ENCODE measurements at regions of chr15 and their contacts with region 1.

Region 1: GRCh38 chr15:79004336-79004735 is 59.5 kb upstream of the CTSH start:
- DNase-seq: peak; percentile 74 to 91 (median 89)
- H3K4me3 ChIP-seq: peak overlapping the region in 1 of 3 experiments; percentile 36
- H3K4me3 Mint-ChIP-seq: peak overlapping the region in 1 of 2 donors; percentile 65
- H3K27ac ChIP-seq: peak overlapping the region in 1 of 2 donors; percentile 39
- H3K27ac Mint-ChIP-seq: peak overlapping the region; percentile 18 to 88 (median 74)
- H3K4me1 ChIP-seq: peaks cover 28 to 40% of the 10 kb centered on the region in 2 donors
- H3K4me1 Mint-ChIP-seq: peaks cover 42% of the 10 kb centered on the region
- H3K27me3 ChIP-seq: no peaks in the 10 kb centered on the region
- H3K27me3 Mint-ChIP-seq: peaks cover 4 to 6% (median 4%) of the 10 kb centered on the region in 3 donors
- CTCF ChIP-seq: no peak

Region 2: DNA sequence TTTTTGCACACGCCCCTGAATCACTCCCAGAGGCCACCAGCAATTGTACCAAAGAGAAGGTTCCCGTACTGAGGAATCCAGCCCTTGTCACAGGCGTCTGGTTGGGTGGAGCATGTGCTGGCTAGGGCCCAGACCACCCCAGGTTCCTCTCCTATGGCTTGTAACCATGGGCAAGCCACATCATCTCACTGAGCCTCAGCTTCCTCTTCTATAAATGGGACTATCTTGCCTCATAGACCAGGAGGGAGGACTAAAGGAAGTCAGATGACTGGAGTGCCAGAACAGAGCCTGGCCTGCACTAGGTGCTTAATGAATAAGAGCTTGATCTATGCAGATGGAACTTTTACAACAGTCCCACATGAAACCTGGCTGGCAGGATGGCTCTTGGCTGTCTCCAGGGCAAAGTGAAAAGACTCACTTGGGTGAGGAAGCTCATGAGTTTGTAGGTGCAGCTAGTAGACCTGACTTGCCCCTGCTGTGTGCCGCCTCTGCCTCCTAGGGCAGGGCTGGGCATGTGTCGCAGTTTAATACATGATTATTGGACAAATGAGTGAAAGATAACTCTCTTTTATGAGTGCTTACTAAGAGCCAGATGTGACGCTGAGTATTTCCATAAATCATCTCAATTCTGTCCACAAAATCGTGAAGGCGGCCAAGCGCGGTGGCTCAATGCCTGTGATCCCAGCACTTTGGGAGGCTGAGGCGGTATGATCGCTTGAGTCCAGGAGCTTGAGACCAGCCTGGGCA is 88.8 kb before region 1 on chr15:
- intact Hi-C with region 1: loop called (anchors 2 to 5 kb)
- DNase-seq: peak; percentile 88 to 97 (median 93)
- H3K4me3 ChIP-seq: peak overlapping the region in 1 of 3 experiments; percentile 38
- H3K4me3 Mint-ChIP-seq: peak overlapping the region in 1 of 2 donors; percentile 33
- H3K27ac ChIP-seq: peak overlapping the region; percentile 81 to 83
- H3K27ac Mint-ChIP-seq: peak overlapping the region; percentile 91 to 95 (median 93)
- H3K4me1 ChIP-seq: peaks cover 72 to 74% of the 10 kb centered on the region in 2 donors
- H3K4me1 Mint-ChIP-seq: peaks cover 69% of the 10 kb centered on the region
- H3K27me3 ChIP-seq: no peaks in the 10 kb centered on the region
- H3K27me3 Mint-ChIP-seq: no peaks in the 10 kb centered on the region
- CTCF ChIP-seq: no peak

Region 3: GRCh38 chr15:78988361-78988911 is 15.9 kb before region 1 on chr15:
- intact Hi-C with region 1: loop called in 1 of 2 experiments (anchors 2 kb)
- DNase-seq: peak; percentile 92 to 96 (median 95)
- H3K4me3 ChIP-seq: no peak overlapping the region
- H3K4me3 Mint-ChIP-seq: no peak overlapping the region
- H3K27ac ChIP-seq: peak overlapping the region; percentile 89
- H3K27ac Mint-ChIP-seq: peak overlapping the region; percentile 94 to 98 (median 94)
- H3K4me1 ChIP-seq: peaks cover 31 to 38% of the 10 kb centered on the region in 2 donors
- H3K4me1 Mint-ChIP-seq: peaks cover 33% of the 10 kb centered on the region
- H3K27me3 ChIP-seq: no peaks in the 10 kb centered on the region
- H3K27me3 Mint-ChIP-seq: peaks cover 0 to 1% (median 0%) of the 10 kb centered on the region in 3 donors
- CTCF ChIP-seq: no peak

Region 4: DNA sequence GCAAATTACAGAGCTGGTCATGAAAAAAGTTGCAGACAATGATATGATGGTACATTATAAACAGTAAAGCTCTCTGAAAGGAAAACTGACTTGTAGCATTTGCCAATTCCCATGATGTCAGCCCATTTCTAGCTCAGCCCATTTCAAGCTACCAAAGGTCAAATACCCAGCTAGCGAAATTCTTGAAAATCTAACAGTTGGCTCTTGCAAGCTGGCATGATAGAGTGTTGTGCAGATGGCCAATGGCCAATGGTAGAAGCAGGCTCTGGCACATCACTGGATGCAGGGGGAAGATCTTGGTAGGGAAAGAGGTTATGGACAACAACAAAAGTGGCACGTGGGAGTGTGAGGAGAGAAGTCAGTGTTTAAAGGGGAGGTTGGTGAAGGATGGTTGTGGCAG is 49.6 kb after region 1 on chr15:
- intact Hi-C with region 1: no loop called
- DNase-seq: no peak
- H3K4me3 ChIP-seq: no peak overlapping the region
- H3K4me3 Mint-ChIP-seq: no peak overlapping the region
- H3K27ac ChIP-seq: no peak overlapping the region
- H3K27ac Mint-ChIP-seq: no peak overlapping the region
- H3K4me1 ChIP-seq: no peaks in the 10 kb centered on the region
- H3K4me1 Mint-ChIP-seq: no peaks in the 10 kb centered on the region
- H3K27me3 ChIP-seq: no peaks in the 10 kb centered on the region
- H3K27me3 Mint-ChIP-seq: peaks cover 2 to 15% (median 11%) of the 10 kb centered on the region in 3 donors
- CTCF ChIP-seq: no peak